Activated B cell treated with CpG ODN at 0.5 μM for 24 hours (primary cell): ENCODE measurements at regions of chr12 and their contacts with region 1.

Region 1: GRCh38 chr12:129911428-129912049 is 7.7 kb upstream of the TMEM132D start:
- DNase-seq: no peak
- ATAC-seq: no peak
- H3K4me3 Mint-ChIP-seq: no peak overlapping the region
- H3K27ac Mint-ChIP-seq: no peak overlapping the region
- H3K4me1 Mint-ChIP-seq: no peaks in the 10 kb centered on the region
- H3K27me3 Mint-ChIP-seq: peaks cover 6% of the 10 kb centered on the region
- CTCF ChIP-seq: no peak

Region 2: DNA sequence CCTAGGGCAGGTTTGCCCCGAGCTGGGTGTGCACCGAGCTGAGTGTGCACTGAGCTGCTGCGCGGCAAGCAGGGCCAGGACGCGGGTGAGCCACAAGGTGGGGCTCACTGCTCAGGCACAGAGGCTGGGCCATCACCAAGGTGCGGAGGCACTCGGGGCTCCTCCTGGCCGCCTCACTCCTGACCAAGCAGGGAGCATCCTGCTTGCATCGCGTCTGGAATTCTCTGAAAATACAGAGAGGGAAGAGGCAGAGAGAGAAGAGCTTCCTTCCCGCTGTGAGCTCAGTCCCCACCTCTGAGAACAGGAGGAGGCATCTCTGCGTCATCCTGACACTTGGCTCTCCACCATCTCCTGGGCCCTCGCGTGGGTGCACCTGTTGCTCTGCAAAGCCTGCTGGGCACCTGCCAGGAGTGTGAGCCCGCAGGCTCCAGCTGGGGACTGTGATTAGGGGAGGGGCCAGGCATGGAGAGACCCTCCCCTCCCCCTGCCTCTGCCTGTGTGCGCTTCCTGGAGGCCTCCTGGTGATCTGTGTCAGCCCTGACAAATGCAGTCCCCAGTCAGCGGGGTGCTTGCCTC is 942.0 kb before region 1 on chr12:
- CTCF ChIA-PET with region 1: no interaction called
- POLR2A ChIA-PET with region 1: no interaction called
- intact Hi-C with region 1: loop called (anchors 5 kb)
- DNase-seq: no peak
- ATAC-seq: peak; percentile 65
- H3K4me3 Mint-ChIP-seq: no peak overlapping the region
- H3K27ac Mint-ChIP-seq: no peak overlapping the region
- H3K4me1 Mint-ChIP-seq: peaks cover 24% of the 10 kb centered on the region
- H3K27me3 Mint-ChIP-seq: peaks cover 47% of the 10 kb centered on the region
- CTCF ChIP-seq: no peak

Region 3: DNA sequence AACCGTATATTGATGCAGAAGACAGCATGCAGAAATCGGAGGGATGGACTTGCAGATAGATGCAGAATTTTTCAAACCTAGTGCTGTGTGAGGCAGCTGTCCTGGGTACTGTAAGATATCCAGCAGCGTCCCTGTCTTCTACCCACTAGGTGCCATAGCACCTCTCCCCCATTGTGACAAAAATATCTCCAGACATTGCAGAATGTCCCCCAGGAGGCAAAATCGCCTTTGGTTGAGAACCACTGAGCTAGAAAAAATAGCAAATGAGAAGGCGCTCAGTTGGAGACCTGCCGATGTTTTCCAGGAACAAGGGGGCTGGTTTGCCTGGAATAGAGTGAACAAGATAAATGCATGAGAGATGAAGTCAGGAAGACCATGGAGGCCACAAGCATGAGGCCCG is 60.2 kb after region 1 on chr12:
- CTCF ChIA-PET with region 1: no interaction called
- POLR2A ChIA-PET with region 1: no interaction called
- intact Hi-C with region 1: no loop called
- DNase-seq: no peak
- ATAC-seq: no peak
- H3K4me3 Mint-ChIP-seq: no peak overlapping the region
- H3K27ac Mint-ChIP-seq: no peak overlapping the region
- H3K4me1 Mint-ChIP-seq: no peaks in the 10 kb centered on the region
- H3K27me3 Mint-ChIP-seq: no peaks in the 10 kb centered on the region
- CTCF ChIP-seq: no peak